Activated CD4-positive, alpha-beta memory T cell treated with anti-CD3 and anti-CD28 coated beads, Interleukin-2, amount 10 ng/mL, durations not matched to agents 7 days and 5 days (primary cell): ENCODE measurements at regions of chr5 and their contacts with region 1.

Region 1: DNA sequence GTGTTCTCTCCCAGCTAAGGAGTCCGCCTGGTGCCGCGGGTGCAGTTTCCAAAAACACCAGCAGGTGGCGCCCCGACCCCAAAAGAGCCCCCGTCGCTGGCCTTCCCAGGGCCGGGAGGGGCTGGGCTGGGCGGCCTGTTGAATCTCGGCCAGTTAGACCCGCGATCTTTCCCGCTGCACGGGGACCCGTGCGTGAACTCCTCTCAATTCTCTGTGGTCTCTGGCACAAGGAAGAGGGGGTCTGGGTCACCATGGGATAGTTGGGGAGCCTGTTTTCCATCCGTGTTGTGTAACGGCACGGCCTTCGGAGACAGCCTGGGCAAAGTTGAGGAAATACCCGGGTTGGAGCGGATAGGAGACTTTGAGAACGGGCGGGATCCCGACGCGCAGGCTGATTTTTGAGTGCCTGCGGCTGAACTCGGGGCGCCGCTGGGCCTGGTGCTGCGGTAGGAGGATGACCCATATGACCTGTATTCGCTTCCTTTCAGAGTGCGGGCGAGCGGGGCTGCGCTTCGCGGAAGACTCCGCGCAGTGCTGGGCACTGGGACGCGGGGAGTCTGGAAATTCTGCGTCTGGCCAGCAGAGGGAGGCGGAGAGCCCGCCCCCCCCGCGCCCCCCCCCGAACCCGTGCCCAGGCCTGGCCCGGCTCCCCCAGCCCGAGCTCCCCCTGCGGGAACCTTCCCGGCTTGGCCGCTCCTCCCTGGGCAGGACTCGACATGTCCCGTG is 7.9 kb upstream of the PSD2 start:
- DNase-seq: peak; percentile 82
- H3K4me3 Mint-ChIP-seq: peak overlapping the region; percentile 57
- H3K27ac Mint-ChIP-seq: no peak overlapping the region
- H3K4me1 Mint-ChIP-seq: peaks cover 4% of the 10 kb centered on the region
- H3K27me3 Mint-ChIP-seq: peaks cover 31% of the 10 kb centered on the region

Region 2: GRCh38 chr5:139415221-139415861 is 372.4 kb before region 1 on chr5:
- CTCF ChIA-PET with region 1: no interaction called
- POLR2A ChIA-PET with region 1: no interaction called
- DNase-seq: peak; percentile 59
- H3K4me3 Mint-ChIP-seq: peak overlapping the region; percentile 33
- H3K27ac Mint-ChIP-seq: peak overlapping the region; percentile 93
- H3K4me1 Mint-ChIP-seq: peaks cover 77% of the 10 kb centered on the region
- H3K27me3 Mint-ChIP-seq: no peaks in the 10 kb centered on the region

Region 3: DNA sequence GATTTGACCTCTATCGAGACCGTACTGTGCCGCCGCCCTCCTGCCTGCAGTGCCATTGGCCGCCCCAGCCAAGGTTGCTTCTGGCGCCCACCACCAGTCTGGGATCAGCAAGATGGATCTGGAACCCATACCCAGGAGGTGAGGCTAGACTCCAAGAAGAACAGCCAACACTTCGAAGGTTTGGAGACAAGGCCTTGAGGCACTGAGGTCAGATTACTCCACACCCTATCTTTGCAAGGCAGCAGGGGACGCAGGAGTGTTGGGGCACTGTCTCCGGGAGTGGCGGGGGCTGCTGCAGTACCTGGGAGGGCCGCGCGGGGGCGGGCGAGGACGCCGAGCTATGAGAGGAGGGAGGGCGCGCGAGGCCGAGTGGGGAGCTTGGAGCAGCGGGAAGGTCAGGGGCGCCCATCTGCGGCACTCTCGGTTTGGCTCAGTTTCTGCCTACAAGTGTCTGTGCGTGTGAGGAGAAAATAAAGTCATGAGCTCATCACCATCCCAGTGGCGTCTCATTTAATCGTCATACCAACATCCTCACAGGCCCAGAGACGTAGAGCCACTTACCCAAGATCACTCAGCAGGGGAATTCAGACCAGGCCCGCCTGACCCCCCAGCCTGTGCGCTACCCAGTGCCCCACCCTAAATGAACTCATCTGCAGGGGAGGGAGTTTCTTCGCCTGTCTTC is 12.6 kb before region 1 on chr5:
- CTCF ChIA-PET with region 1: interaction called, 59 read pairs
- POLR2A ChIA-PET with region 1: interaction called, 3 read pairs
- DNase-seq: peak; percentile 76
- H3K4me3 Mint-ChIP-seq: no peak overlapping the region
- H3K27ac Mint-ChIP-seq: no peak overlapping the region
- H3K4me1 Mint-ChIP-seq: peaks cover 8% of the 10 kb centered on the region
- H3K27me3 Mint-ChIP-seq: peaks cover 34% of the 10 kb centered on the region

Region 4: GRCh38 chr5:139797856-139798510 is 10.3 kb after region 1 on chr5:
- CTCF ChIA-PET with region 1: interaction called, 11 read pairs
- POLR2A ChIA-PET with region 1: no interaction called
- DNase-seq: no peak
- H3K4me3 Mint-ChIP-seq: no peak overlapping the region
- H3K27ac Mint-ChIP-seq: no peak overlapping the region
- H3K4me1 Mint-ChIP-seq: no peaks in the 10 kb centered on the region
- H3K27me3 Mint-ChIP-seq: peaks cover 69% of the 10 kb centered on the region

Region 5: GRCh38 chr5:139806726-139807646 is 19.3 kb after region 1 on chr5:
- CTCF ChIA-PET with region 1: interaction called, 10 read pairs
- POLR2A ChIA-PET with region 1: no interaction called
- DNase-seq: no peak
- H3K4me3 Mint-ChIP-seq: no peak overlapping the region
- H3K27ac Mint-ChIP-seq: no peak overlapping the region
- H3K4me1 Mint-ChIP-seq: no peaks in the 10 kb centered on the region
- H3K27me3 Mint-ChIP-seq: peaks cover 3% of the 10 kb centered on the region

Region 6: GRCh38 chr5:139844472-139845145 is 56.9 kb after region 1 on chr5:
- CTCF ChIA-PET with region 1: interaction called, 15 read pairs
- POLR2A ChIA-PET with region 1: no interaction called
- DNase-seq: peak; percentile 66
- H3K4me3 Mint-ChIP-seq: no peak overlapping the region
- H3K27ac Mint-ChIP-seq: no peak overlapping the region
- H3K4me1 Mint-ChIP-seq: peaks cover 8% of the 10 kb centered on the region
- H3K27me3 Mint-ChIP-seq: peaks cover 45% of the 10 kb centered on the region

Region 7: GRCh38 chr5:139863855-139864558 is 76.3 kb after region 1 on chr5:
- CTCF ChIA-PET with region 1: interaction called, 41 read pairs
- POLR2A ChIA-PET with region 1: no interaction called
- DNase-seq: peak; percentile 54
- H3K4me3 Mint-ChIP-seq: no peak overlapping the region
- H3K27ac Mint-ChIP-seq: no peak overlapping the region
- H3K4me1 Mint-ChIP-seq: no peaks in the 10 kb centered on the region
- H3K27me3 Mint-ChIP-seq: peaks cover 13% of the 10 kb centered on the region

Region 8: GRCh38 chr5:140131967-140132409 is 344.3 kb after region 1 on chr5:
- CTCF ChIA-PET with region 1: no interaction called
- POLR2A ChIA-PET with region 1: no interaction called
- DNase-seq: no peak
- H3K4me3 Mint-ChIP-seq: no peak overlapping the region
- H3K27ac Mint-ChIP-seq: no peak overlapping the region
- H3K4me1 Mint-ChIP-seq: peaks cover 22% of the 10 kb centered on the region
- H3K27me3 Mint-ChIP-seq: no peaks in the 10 kb centered on the region